ENCODE measurements at regions of chr6 and their contacts with region 1.

Region 1: GRCh38 chr6:127606131-127606562 is 29.2 kb downstream of the C6orf58 start:
- DNase-seq: peak; percentile 31
- H3K4me3 ChIP-seq: no peak overlapping the region
- H3K27ac ChIP-seq: no peak overlapping the region
- H3K4me1 ChIP-seq: no peaks in the 10 kb centered on the region
- H3K27me3 ChIP-seq: peaks cover 3% of the 10 kb centered on the region
- CTCF ChIP-seq: peak; percentile 37 to 54

Region 2: GRCh38 chr6:127547215-127547614 is 58.9 kb before region 1 on chr6:
- CTCF ChIA-PET with region 1: no interaction called
- dilution Hi-C with region 1: loop called (anchors 5 kb)
- in situ Hi-C with region 1: no loop called
- intact Hi-C with region 1: no loop called
- DNase-seq: no peak
- H3K4me3 ChIP-seq: no peak overlapping the region
- H3K27ac ChIP-seq: no peak overlapping the region
- H3K4me1 ChIP-seq: no peaks in the 10 kb centered on the region
- H3K27me3 ChIP-seq: no peaks in the 10 kb centered on the region
- CTCF ChIP-seq: peak in 1 of 2 donors; percentile 40

Region 3: GRCh38 chr6:127554435-127555006 is 51.6 kb before region 1 on chr6:
- CTCF ChIA-PET with region 1: no interaction called
- dilution Hi-C with region 1: loop called (anchors 5 kb)
- in situ Hi-C with region 1: no loop called
- intact Hi-C with region 1: loop called (anchors 1 kb)
- DNase-seq: peak; percentile 41
- H3K4me3 ChIP-seq: no peak overlapping the region
- H3K27ac ChIP-seq: no peak overlapping the region
- H3K4me1 ChIP-seq: no peaks in the 10 kb centered on the region
- H3K27me3 ChIP-seq: peaks cover 3% of the 10 kb centered on the region
- CTCF ChIP-seq: peak; percentile 60 to 73

Region 4: GRCh38 chr6:127641905-127642304 is 35.8 kb after region 1 on chr6:
- CTCF ChIA-PET with region 1: interaction called, 4 read pairs
- dilution Hi-C with region 1: no loop called
- in situ Hi-C with region 1: no loop called
- intact Hi-C with region 1: loop called (anchors 1 kb)
- DNase-seq: peak; percentile 20
- H3K4me3 ChIP-seq: no peak overlapping the region
- H3K27ac ChIP-seq: no peak overlapping the region
- H3K4me1 ChIP-seq: no peaks in the 10 kb centered on the region
- H3K27me3 ChIP-seq: peaks cover 4% of the 10 kb centered on the region
- CTCF ChIP-seq: peak; percentile 67 to 82

Region 5: DNA sequence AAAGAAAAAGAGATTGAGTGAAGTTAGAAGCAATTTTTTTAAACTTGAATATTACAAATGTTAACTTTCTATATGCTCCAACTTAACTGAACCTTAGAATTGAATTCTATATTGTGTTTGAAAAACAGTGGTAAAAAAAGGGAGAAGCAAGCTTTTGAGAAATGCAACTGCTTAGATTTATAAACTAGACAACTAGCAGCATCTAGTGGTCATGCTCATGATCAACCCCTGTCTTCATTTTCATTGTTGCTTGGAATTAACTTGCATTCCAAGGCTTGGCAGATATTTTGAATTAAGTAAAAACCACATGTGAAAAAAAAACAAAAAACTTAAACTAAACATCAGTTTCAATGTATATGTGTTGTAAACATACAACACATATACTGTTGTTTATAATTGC is 83.9 kb after region 1 on chr6:
- CTCF ChIA-PET with region 1: no interaction called
- dilution Hi-C with region 1: no loop called
- in situ Hi-C with region 1: no loop called
- intact Hi-C with region 1: loop called (anchors 2 kb)
- DNase-seq: peak; percentile 1
- H3K4me3 ChIP-seq: no peak overlapping the region
- H3K27ac ChIP-seq: no peak overlapping the region
- H3K4me1 ChIP-seq: no peaks in the 10 kb centered on the region
- H3K27me3 ChIP-seq: peaks cover 5% of the 10 kb centered on the region
- CTCF ChIP-seq: peak; percentile 74 to 76

Measured in mammary epithelial cell (primary cell).